Activated T-helper 1 cell treated with anti-CD3 and anti-CD28 coated beads, Interleukin-12 subunit alpha, Interleukin-12 subunit beta, Interleukin-2, Interleukin-4 antibody, amounts not matched to agents 30 ng/mL and 10 ng/mL and 1 ng/mL, durations not matched to agents 14 hours and 24 hours and 36 hours (primary cell): ENCODE measurements at regions of chr3 and their contacts with region 1.

Region 1: GRCh38 chr3:122092460-122093165 is 37.5 kb downstream of the CD86 start:
- DNase-seq: peak; percentile 55
- H3K4me3 Mint-ChIP-seq: peak overlapping the region; percentile 32
- H3K27ac Mint-ChIP-seq: peak overlapping the region; percentile 90
- H3K4me1 Mint-ChIP-seq: peaks cover 40% of the 10 kb centered on the region
- H3K27me3 Mint-ChIP-seq: no peaks in the 10 kb centered on the region

Region 2: DNA sequence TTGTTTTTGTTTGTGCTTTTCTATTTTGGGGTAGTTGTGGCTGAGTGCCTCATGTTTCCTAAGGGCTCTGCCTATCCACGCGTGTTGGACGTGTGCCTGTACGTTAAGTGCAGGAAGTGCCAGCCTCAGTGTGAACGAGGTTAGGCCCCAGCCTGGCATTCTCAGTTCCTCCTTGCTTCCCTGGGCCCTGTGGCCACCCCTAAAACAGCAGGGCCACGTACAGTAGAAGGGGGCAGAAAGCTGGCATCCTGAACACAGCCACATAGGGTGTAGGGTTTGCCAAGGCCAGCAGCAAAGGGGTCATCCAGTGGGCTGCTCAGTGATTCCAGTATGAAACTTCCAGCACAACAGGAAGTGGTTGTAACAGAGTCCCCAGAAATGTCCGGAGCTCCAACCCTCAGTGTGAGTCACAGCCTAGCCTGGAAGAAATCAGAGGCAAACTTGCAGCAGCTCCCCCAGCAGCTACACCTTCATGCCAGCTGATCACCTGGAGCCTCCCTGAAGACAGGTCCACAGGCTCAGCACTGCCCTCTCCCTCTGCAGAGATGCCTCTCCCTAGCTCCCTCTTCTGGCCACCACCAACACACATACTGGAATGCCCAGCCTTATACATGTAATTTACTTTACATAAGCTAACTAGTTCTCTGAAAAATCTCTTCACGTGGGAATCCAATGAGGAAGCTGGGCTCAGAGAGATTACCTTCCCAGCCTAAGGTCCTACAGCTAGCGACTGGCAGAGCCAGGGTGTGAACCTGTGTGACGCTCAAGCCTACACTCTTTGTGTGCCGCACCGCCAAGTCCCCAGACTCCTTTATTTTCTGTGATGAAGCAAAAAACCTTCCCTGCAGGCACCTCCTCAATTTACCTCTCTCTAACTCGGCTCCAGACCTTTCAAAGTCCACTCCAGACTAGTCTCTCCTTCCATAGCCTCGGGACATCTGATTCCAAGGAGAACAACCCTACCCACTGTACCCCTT is 97.2 kb before region 1 on chr3:
- intact Hi-C with region 1: loop called (anchors 5 kb)
- DNase-seq: no peak
- H3K4me3 Mint-ChIP-seq: no peak overlapping the region
- H3K27ac Mint-ChIP-seq: no peak overlapping the region
- H3K4me1 Mint-ChIP-seq: peaks cover 45% of the 10 kb centered on the region
- H3K27me3 Mint-ChIP-seq: no peaks in the 10 kb centered on the region

Region 3: DNA sequence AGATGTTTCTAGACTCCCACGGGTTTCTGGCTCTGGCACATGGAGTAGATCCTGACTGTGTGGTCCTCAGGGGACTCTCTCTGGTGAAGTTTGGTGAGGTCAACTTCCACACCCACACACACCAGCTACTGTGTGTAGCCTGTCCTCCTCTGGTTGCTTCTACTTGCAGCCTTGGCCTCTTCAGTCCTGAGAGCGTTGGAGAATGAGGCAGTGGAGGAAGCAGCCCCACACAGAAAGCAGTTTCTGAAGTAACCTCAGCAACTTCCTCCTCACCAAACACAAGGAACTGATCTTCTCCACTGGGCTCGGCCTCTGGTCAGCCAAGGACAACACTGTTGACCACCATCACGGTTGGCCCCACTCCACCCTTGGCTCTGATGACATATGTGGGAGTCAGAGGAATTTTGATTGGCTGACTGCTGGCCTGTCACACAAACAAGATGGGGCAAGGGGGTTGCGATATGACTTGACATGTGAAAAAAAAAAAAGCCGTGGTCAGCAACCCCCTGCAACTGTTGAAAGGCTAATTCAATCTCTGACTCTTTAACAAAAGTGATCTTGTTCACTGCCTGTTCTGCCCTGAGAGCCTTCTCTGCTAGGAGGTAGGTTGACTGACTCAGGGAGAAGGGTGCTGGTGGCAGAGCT is 17.9 kb before region 1 on chr3:
- intact Hi-C with region 1: loop called (anchors 1 kb)
- DNase-seq: peak; percentile 43
- H3K4me3 Mint-ChIP-seq: peak overlapping the region; percentile 71
- H3K27ac Mint-ChIP-seq: peak overlapping the region; percentile 87
- H3K4me1 Mint-ChIP-seq: peaks cover 62% of the 10 kb centered on the region
- H3K27me3 Mint-ChIP-seq: no peaks in the 10 kb centered on the region